ENCODE measurements at regions of chr6 and their contacts with region 1.

Region 1: DNA sequence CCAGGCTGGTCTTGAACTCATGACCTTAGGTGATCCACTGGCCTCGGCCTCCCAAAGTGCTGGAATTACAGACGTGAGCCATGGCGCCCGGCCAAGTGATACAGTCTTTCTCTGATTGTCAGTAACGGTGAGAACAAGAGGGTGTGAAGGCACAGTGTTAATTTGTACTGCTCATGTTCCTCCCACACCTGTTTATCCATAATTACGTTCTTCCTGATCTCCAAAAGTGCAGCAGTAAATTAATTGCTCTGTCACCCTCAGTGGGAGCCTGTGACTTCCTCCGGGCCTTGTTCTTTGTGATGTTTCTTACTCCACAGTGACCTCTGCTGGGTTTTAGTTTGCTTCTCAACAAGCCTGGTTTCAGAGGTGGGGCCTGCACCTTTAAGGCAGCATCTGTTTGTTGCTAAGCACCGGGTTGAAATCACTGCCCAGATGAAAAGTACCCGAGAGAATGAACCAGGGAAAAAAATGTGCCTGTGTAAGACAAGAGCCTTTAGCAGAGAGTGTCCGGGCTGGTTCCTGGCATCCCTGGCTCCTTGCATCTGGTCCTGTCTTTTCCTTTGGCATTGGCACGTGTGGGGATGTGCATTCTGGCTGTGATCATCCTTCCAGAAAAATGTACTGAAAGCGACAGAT is 89.1 kb upstream of the CLDN20 start:
- DNase-seq: peak; percentile 9 to 81 (median 42)
- ATAC-seq: peak; percentile 50
- H3K4me3 ChIP-seq: no peak overlapping the region
- H3K4me3 Mint-ChIP-seq: no peak overlapping the region
- H3K27ac ChIP-seq: no peak overlapping the region
- H3K27ac Mint-ChIP-seq: no peak overlapping the region
- H3K4me1 ChIP-seq: no peaks in the 10 kb centered on the region
- H3K4me1 Mint-ChIP-seq: peaks cover 19% of the 10 kb centered on the region
- H3K27me3 ChIP-seq: no peaks in the 10 kb centered on the region
- H3K27me3 Mint-ChIP-seq: no peaks in the 10 kb centered on the region
- CTCF ChIP-seq: peak; percentile 28

Region 2: GRCh38 chr6:153503810-153504209 is 1670.9 kb before region 1 on chr6:
- CTCF ChIA-PET with region 1: no interaction called
- POLR2A ChIA-PET with region 1: no interaction called
- intact Hi-C with region 1: no loop called
- DNase-seq: no peak
- ATAC-seq: no peak
- H3K4me3 ChIP-seq: no peak overlapping the region
- H3K4me3 Mint-ChIP-seq: no peak overlapping the region
- H3K27ac ChIP-seq: no peak overlapping the region
- H3K27ac Mint-ChIP-seq: no peak overlapping the region
- H3K4me1 ChIP-seq: no peaks in the 10 kb centered on the region
- H3K4me1 Mint-ChIP-seq: no peaks in the 10 kb centered on the region
- H3K27me3 ChIP-seq: no peaks in the 10 kb centered on the region
- H3K27me3 Mint-ChIP-seq: no peaks in the 10 kb centered on the region
- CTCF ChIP-seq: no peak

Region 3: DNA sequence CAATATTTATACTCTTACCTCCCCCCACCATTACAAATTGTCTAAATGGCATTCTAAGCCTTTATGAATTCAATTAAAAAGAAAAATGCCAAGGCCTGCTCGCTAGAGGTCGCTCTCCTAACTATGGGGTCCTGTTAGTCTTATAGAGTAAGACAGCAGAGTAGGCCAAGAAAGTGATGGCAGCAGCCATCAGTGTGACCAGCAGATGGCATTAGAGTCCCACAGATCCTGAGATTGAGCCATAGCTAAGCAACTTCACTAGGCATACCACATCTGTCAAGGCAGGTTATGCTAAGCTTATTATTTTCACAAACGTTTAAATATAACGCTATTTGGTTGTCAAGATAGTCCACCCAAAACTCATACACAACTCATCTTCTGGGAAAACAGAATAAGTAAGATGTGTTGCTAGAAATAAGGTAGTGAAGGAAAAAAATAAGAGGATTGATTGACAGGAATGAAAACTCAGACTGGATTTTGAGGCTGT is 499.0 kb before region 1 on chr6:
- CTCF ChIA-PET with region 1: interaction called, 8 read pairs
- POLR2A ChIA-PET with region 1: no interaction called
- intact Hi-C with region 1: loop called (anchors 1 to 2 kb)
- DNase-seq: peak; percentile 77 to 95 (median 85)
- ATAC-seq: peak; percentile 100
- H3K4me3 ChIP-seq: no peak overlapping the region
- H3K4me3 Mint-ChIP-seq: no peak overlapping the region
- H3K27ac ChIP-seq: no peak overlapping the region
- H3K27ac Mint-ChIP-seq: no peak overlapping the region
- H3K4me1 ChIP-seq: no peaks in the 10 kb centered on the region
- H3K4me1 Mint-ChIP-seq: no peaks in the 10 kb centered on the region
- H3K27me3 ChIP-seq: no peaks in the 10 kb centered on the region
- H3K27me3 Mint-ChIP-seq: no peaks in the 10 kb centered on the region
- CTCF ChIP-seq: peak; percentile 100

Region 4: DNA sequence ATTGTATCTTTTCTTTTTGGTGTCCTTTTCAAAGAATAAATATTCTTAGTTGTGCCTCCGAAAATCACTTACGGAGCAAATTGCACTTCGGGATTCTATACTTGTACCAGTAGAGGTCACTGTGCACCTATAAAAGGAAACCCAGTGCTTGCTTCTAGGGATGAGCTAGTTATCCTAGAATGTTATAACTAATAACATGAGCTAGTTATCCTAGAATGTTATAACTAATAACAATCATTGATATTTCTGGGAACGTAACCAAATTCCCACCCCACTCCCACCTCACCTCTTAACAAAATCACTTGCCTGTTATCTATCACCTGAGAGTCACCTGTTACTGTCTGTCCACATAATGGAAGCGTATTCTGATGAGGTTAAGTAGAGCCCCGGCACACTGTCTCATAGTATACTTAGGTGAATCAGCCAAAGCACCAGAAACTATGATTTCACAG is 306.5 kb before region 1 on chr6:
- CTCF ChIA-PET with region 1: interaction called, 3 read pairs
- POLR2A ChIA-PET with region 1: no interaction called
- intact Hi-C with region 1: loop called (anchors 1 to 2 kb)
- DNase-seq: peak in 2 of 9 experiments; percentile 26 to 46
- ATAC-seq: no peak
- H3K4me3 ChIP-seq: no peak overlapping the region
- H3K4me3 Mint-ChIP-seq: no peak overlapping the region
- H3K27ac ChIP-seq: no peak overlapping the region
- H3K27ac Mint-ChIP-seq: no peak overlapping the region
- H3K4me1 ChIP-seq: no peaks in the 10 kb centered on the region
- H3K4me1 Mint-ChIP-seq: peaks cover 10% of the 10 kb centered on the region
- H3K27me3 ChIP-seq: no peaks in the 10 kb centered on the region
- H3K27me3 Mint-ChIP-seq: no peaks in the 10 kb centered on the region
- CTCF ChIP-seq: peak; percentile 49

Region 5: DNA sequence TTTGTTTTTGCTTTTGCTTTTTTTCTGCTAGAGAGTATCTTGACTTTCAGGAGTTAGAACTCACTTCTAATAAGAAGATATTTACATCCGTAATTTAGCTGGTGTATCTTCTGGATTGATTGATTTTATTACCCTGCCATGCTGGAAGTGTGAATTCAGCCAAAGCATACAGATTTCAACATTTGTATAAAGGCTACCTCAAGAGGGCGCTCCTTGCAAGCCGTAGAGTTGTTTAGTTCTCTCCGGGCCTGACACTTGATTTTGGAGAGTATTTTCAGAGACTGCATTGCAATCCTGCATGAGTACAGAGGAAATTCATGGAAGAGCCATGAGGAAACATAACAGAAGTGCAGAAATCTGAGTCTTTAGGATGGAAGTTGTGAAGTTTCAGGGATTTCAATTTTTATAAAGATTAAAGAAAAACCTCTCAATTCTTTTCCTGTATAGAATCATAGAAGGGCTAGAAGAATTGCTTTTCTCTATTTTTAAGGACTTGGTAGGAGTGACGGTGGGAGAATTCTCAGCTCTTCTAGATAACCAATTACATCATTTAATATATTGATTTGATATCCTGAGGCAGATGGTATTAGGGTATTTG is 246.3 kb before region 1 on chr6:
- CTCF ChIA-PET with region 1: interaction called, 22 read pairs
- POLR2A ChIA-PET with region 1: no interaction called
- intact Hi-C with region 1: loop called (anchors 1 kb)
- DNase-seq: peak; percentile 14 to 70 (median 50)
- ATAC-seq: no peak
- H3K4me3 ChIP-seq: no peak overlapping the region
- H3K4me3 Mint-ChIP-seq: no peak overlapping the region
- H3K27ac ChIP-seq: no peak overlapping the region
- H3K27ac Mint-ChIP-seq: no peak overlapping the region
- H3K4me1 ChIP-seq: no peaks in the 10 kb centered on the region
- H3K4me1 Mint-ChIP-seq: peaks cover 9% of the 10 kb centered on the region
- H3K27me3 ChIP-seq: no peaks in the 10 kb centered on the region
- H3K27me3 Mint-ChIP-seq: no peaks in the 10 kb centered on the region
- CTCF ChIP-seq: peak; percentile 76

Region 6: GRCh38 chr6:155143029-155143577 is 31.6 kb before region 1 on chr6:
- CTCF ChIA-PET with region 1: interaction called, 3 read pairs
- POLR2A ChIA-PET with region 1: no interaction called
- intact Hi-C with region 1: loop called (anchors 2 kb)
- DNase-seq: peak in 1 of 9 experiments; percentile 26
- ATAC-seq: peak; percentile 48
- H3K4me3 ChIP-seq: peak overlapping the region; percentile 20 to 23
- H3K4me3 Mint-ChIP-seq: peak overlapping the region; percentile 85
- H3K27ac ChIP-seq: peak overlapping the region; percentile 29 to 58
- H3K27ac Mint-ChIP-seq: peak overlapping the region; percentile 91
- H3K4me1 ChIP-seq: peaks cover 6% of the 10 kb centered on the region
- H3K4me1 Mint-ChIP-seq: peaks cover 27% of the 10 kb centered on the region
- H3K27me3 ChIP-seq: no peaks in the 10 kb centered on the region
- H3K27me3 Mint-ChIP-seq: no peaks in the 10 kb centered on the region
- CTCF ChIP-seq: no peak

Region 7: GRCh38 chr6:155264693-155265320 is 90.1 kb after region 1 on chr6:
- CTCF ChIA-PET with region 1: no interaction called
- POLR2A ChIA-PET with region 1: no interaction called
- intact Hi-C with region 1: loop called in 1 of 2 experiments (anchors 10 kb)
- DNase-seq: no peak
- ATAC-seq: no peak
- H3K4me3 ChIP-seq: no peak overlapping the region
- H3K4me3 Mint-ChIP-seq: no peak overlapping the region
- H3K27ac ChIP-seq: no peak overlapping the region
- H3K27ac Mint-ChIP-seq: no peak overlapping the region
- H3K4me1 ChIP-seq: no peaks in the 10 kb centered on the region
- H3K4me1 Mint-ChIP-seq: peaks cover 6% of the 10 kb centered on the region
- H3K27me3 ChIP-seq: no peaks in the 10 kb centered on the region
- H3K27me3 Mint-ChIP-seq: no peaks in the 10 kb centered on the region
- CTCF ChIP-seq: no peak

Region 8: DNA sequence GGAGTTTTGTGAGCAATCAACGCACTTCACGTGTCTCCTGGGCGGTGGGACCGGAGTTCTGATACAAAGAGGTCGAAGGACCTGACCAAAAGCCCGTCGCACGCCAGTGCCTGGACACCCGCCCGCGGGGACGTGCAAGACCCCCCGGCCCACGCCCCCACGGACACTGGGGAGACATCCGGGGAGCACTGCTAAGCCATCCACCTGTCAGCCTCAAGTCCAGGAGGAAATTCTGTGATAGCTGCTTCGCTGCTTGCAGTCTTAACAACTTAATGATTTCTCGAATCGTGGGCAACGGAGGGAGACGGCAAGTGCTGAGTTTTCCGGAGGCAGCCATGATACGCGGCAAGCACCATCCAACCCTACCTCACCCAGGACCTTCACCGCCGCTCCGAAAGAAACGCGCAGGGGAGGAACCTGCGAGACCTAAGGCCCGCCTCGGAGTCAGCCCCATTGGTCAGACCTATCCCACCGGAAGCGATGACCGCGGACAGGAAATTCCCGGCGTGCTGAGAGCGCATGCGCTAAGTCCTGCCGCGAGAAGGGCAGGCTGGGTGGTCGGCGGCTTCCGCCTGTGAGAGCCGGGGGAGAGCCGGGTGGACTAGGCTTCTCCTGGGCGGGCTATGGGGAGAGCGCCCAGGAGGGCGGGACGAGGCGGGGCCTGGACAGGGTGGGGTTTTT is 139.5 kb after region 1 on chr6 and contains the start of gene TFB1M:
- CTCF ChIA-PET with region 1: interaction called, 6 read pairs
- POLR2A ChIA-PET with region 1: no interaction called
- intact Hi-C with region 1: loop called (anchors 2 kb)
- DNase-seq: peak; percentile 91 to 99 (median 97)
- ATAC-seq: peak; percentile 93
- H3K4me3 ChIP-seq: peak within 1 kb of the TSS; percentile 92 to 97
- H3K4me3 Mint-ChIP-seq: peak within 1 kb of the TSS; percentile 98
- H3K27ac ChIP-seq: peak within 1 kb of the TSS; percentile 83 to 87
- H3K27ac Mint-ChIP-seq: peak within 1 kb of the TSS; percentile 97
- H3K4me1 ChIP-seq: peaks cover 7% of the 10 kb centered on the region
- H3K4me1 Mint-ChIP-seq: peaks cover 35% of the 10 kb centered on the region
- H3K27me3 ChIP-seq: no peaks in the 10 kb centered on the region
- H3K27me3 Mint-ChIP-seq: no peaks in the 10 kb centered on the region
- CTCF ChIP-seq: no peak
- total RNA-seq, gene TFB1M: 6.3 to 7.9 TPM

Region 9: GRCh38 chr6:155958550-155958949 is 783.9 kb after region 1 on chr6:
- CTCF ChIA-PET with region 1: no interaction called
- POLR2A ChIA-PET with region 1: no interaction called
- intact Hi-C with region 1: no loop called
- DNase-seq: no peak
- ATAC-seq: no peak
- H3K4me3 ChIP-seq: no peak overlapping the region
- H3K4me3 Mint-ChIP-seq: no peak overlapping the region
- H3K27ac ChIP-seq: no peak overlapping the region
- H3K27ac Mint-ChIP-seq: no peak overlapping the region
- H3K4me1 ChIP-seq: no peaks in the 10 kb centered on the region
- H3K4me1 Mint-ChIP-seq: no peaks in the 10 kb centered on the region
- H3K27me3 ChIP-seq: no peaks in the 10 kb centered on the region
- H3K27me3 Mint-ChIP-seq: no peaks in the 10 kb centered on the region
- CTCF ChIP-seq: no peak

Measured in CD8-positive, alpha-beta T cell (primary cell).